ENCODE measurements at regions of chr10 and their contacts with region 1.

Region 1: DNA sequence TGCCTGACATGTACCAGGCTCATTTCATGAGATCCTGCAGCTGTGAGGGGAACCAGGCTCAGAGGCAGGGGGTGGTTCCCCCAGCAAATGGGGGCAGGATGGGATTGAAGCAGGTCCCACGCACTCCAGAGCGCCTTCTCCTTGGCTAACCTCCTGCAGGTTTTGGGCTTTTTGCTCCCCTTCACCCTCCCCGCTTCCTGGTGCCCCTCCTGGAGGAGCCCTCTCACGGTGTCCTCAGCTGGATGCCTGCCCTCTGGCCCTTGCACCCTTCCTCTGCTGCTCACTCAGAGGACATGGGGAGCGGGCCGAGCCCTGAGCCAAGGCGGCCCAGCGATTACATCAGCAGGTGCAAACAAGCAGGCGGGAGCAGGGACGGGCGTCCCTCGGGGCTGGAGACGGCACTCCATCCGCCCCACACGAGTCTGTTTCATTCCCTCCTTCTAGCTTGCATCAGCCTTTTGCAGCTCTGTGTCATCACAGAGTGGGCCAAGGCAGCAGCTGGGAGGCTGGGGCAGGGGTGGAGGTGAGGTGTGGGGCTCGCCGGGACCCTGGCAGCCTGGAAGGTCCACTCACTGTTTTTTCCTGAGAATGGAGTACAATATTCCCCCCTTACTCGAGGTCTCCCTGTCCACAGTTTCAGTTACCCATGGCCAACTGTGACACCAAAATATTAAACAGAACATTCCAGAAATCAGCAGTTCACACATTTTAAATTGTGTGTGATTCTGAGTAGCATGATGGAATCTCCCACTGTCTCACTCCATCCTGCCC is 52.7 kb upstream of the SLC29A3 start:
- DNase-seq: peak; percentile 48 to 74 (median 60)
- ATAC-seq: peak; percentile 89
- H3K4me3 ChIP-seq: no peak overlapping the region
- H3K27ac ChIP-seq: peak overlapping the region; percentile 67; the same call in 2 of the 3 replicates
- H3K4me1 ChIP-seq: peaks cover 29 to 58% of the 10 kb centered on the region in 2 experiments
- H3K27me3 ChIP-seq: no peaks in the 10 kb centered on the region; a peak in 1 of 5 replicates
- CTCF ChIP-seq: peak in 1 of 3 experiments; percentile 1; a peak in 1 of 6 replicates
- EP300 ChIP-seq: peak; percentile 97
- POLR2A ChIP-seq: no peak
- RAD21 ChIP-seq: peak; percentile 46 to 53; a peak in 3 of 4 replicates

Region 2: GRCh38 chr10:71241114-71241898 is 25.0 kb before region 1 on chr10:
- CTCF ChIA-PET with region 1: no interaction called
- POLR2A ChIA-PET with region 1: interaction called, 13 read pairs
- in situ Hi-C with region 1: no loop called
- intact Hi-C with region 1: no loop called
- DNase-seq: no peak
- ATAC-seq: peak; percentile 33
- H3K4me3 ChIP-seq: no peak overlapping the region
- H3K27ac ChIP-seq: no peak overlapping the region
- H3K4me1 ChIP-seq: peaks cover 30 to 38% of the 10 kb centered on the region in 2 experiments
- H3K27me3 ChIP-seq: peaks cover 0 to 11% of the 10 kb centered on the region in 2 experiments; a peak in 2 of 5 replicates
- CTCF ChIP-seq: no peak
- EP300 ChIP-seq: no peak
- POLR2A ChIP-seq: no peak
- RAD21 ChIP-seq: no peak

Region 3: DNA sequence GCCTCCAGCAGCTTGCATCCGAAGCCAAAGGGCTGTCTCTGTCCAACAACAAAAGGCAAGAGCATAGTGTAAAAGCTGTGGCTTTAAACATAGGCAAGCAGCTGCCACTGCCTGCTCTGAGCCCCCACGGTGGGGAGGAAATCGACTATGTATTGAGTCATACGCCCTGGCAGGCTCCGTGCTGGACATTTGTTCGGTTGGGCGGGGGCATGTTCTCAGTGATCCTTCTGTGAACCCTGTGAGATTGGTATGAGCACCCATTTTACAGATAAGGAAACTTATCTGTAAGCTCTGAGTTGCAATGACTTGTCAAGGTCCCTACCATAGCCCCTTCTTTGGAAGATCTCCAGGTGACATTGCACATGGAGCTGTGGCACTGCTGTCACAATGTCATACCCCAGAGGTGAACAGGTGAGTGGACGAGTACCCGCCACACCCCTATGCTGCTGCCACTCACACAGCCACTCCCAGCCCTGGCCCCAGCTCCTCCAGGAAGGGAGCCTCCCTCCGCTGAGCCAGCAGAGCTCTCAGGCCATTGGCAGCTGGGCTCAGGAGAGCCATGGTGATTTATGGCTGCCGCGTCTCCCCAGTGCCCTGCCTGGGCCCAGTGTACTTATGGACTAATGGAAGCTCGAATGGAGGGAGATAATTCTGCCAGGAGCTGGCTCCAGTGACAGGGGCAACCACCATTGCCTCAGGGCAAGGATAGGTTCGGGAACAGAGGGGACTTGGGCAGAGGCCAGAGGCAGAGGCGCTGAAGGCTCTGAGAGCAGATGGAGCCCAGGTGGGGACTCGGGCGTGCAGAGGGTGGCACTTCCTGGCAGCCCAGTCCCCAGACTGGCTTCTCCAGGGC is 10.3 kb before region 1 on chr10:
- CTCF ChIA-PET with region 1: no interaction called
- POLR2A ChIA-PET with region 1: interaction called, 15 read pairs
- in situ Hi-C with region 1: no loop called
- intact Hi-C with region 1: no loop called
- DNase-seq: no peak
- ATAC-seq: peak; percentile 54
- H3K4me3 ChIP-seq: no peak overlapping the region
- H3K27ac ChIP-seq: no peak overlapping the region
- H3K4me1 ChIP-seq: peaks cover 7 to 20% of the 10 kb centered on the region in 2 experiments; a peak in 4 of 5 replicates
- H3K27me3 ChIP-seq: peaks cover 0 to 24% of the 10 kb centered on the region in 2 experiments; a peak in 2 of 5 replicates
- CTCF ChIP-seq: no peak
- EP300 ChIP-seq: no peak
- POLR2A ChIP-seq: no peak
- RAD21 ChIP-seq: no peak

Region 4: GRCh38 chr10:71740069-71740468 is 473.7 kb after region 1 on chr10:
- CTCF ChIA-PET with region 1: no interaction called
- POLR2A ChIA-PET with region 1: no interaction called
- in situ Hi-C with region 1: no loop called
- intact Hi-C with region 1: no loop called
- DNase-seq: peak in 1 of 4 experiments; percentile 41
- ATAC-seq: peak; percentile 40
- H3K4me3 ChIP-seq: no peak overlapping the region
- H3K27ac ChIP-seq: no peak overlapping the region
- H3K4me1 ChIP-seq: peaks cover 20 to 30% of the 10 kb centered on the region in 2 experiments
- H3K27me3 ChIP-seq: no peaks in the 10 kb centered on the region
- CTCF ChIP-seq: no peak
- EP300 ChIP-seq: no peak
- POLR2A ChIP-seq: no peak
- RAD21 ChIP-seq: no peak

Measured in K562 (cell line).